ENCODE measurements at regions of chr11 and their contacts with region 1.

Region 1: DNA sequence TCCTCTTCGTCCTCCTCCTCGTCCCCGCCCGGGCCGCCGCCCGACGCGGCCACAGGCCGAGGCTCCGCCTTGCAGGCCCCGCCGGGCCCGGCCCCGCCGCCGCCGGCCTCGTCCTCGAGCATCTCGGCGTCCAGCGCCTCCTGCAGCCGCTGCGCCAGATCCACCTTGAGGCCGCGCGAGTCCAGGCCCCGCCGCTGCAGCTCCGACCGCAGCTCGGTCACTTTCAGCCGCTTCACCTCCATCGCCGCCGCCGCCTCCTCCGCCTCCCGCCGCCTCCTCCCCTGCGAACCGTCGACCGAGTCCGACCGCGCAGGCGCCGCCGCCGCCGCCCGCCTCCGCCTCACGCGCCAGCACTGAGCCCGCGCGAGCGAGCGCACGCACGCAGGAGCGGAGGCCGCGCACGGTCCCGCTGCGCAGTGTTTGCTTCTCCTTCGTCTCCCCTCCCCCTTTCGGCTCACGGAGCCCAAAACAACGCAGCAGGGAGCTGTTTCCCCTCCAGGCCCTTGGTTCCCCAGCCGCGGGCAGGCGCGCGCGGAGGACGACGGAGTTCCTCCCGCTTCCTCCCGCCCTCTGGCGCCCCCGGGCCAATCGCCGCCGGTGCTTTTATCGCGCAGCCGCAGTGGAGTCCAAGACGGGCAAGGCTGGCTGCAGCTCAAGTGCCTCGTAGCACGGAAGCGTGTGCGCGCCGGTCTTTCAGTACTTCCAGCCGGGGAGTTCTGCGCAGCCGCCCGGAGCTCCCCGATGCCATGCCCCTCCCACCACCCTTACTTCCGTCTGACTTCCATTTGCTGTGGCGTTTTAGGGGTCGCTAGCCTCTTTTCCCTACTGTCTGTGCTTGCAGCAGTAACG is at the start of gene HNRNPUL2:
- DNase-seq: peak; percentile 99
- ATAC-seq: peak; percentile 85
- H3K4me3 ChIP-seq: peak within 1 kb of the TSS; percentile 85
- H3K27ac ChIP-seq: peak within 1 kb of the TSS; percentile 96
- H3K4me1 ChIP-seq: peaks cover 4% of the 10 kb centered on the region
- H3K27me3 ChIP-seq: no peaks in the 10 kb centered on the region
- CTCF ChIP-seq: 0 out of 2 replicates have a peak, but pooled peaks have one; percentile 5
- POLR2A ChIP-seq: peak; percentile 87
- RAD21 ChIP-seq: no peak
- total RNA-seq, gene HNRNPUL2: 3.9 and 5.0 TPM in 2 replicates

Region 2: GRCh38 chr11:62573592-62574362 is 153.4 kb before region 1 on chr11 and contains the start of gene EEF1G:
- CTCF ChIA-PET with region 1: no interaction called
- POLR2A ChIA-PET with region 1: no interaction called
- dilution Hi-C with region 1: no loop called
- in situ Hi-C with region 1: no loop called
- intact Hi-C with region 1: no loop called
- DNase-seq: peak; percentile 100
- ATAC-seq: peak; percentile 95
- H3K4me3 ChIP-seq: peak within 1 kb of the TSS; percentile 74
- H3K27ac ChIP-seq: peak within 1 kb of the TSS; percentile 91
- H3K4me1 ChIP-seq: peaks cover 12% of the 10 kb centered on the region
- H3K27me3 ChIP-seq: no peaks in the 10 kb centered on the region
- CTCF ChIP-seq: no peak
- POLR2A ChIP-seq: peak; percentile 94
- RAD21 ChIP-seq: no peak
- total RNA-seq, gene EEF1G: 1,598 and 1,857 TPM in 2 replicates

Region 3: GRCh38 chr11:62705880-62706849 is 21.0 kb before region 1 on chr11:
- CTCF ChIA-PET with region 1: interaction called, 3 read pairs
- POLR2A ChIA-PET with region 1: interaction called, 11 read pairs
- dilution Hi-C with region 1: no loop called
- in situ Hi-C with region 1: no loop called
- intact Hi-C with region 1: no loop called
- DNase-seq: peak; percentile 91
- ATAC-seq: peak; percentile 90
- H3K4me3 ChIP-seq: peak overlapping the region; percentile 55
- H3K27ac ChIP-seq: peak overlapping the region; percentile 33
- H3K4me1 ChIP-seq: peaks cover 16% of the 10 kb centered on the region
- H3K27me3 ChIP-seq: no peaks in the 10 kb centered on the region
- CTCF ChIP-seq: no peak
- POLR2A ChIP-seq: 0 out of 2 replicates have a peak, but pooled peaks have one; percentile 31
- RAD21 ChIP-seq: no peak

Region 4: DNA sequence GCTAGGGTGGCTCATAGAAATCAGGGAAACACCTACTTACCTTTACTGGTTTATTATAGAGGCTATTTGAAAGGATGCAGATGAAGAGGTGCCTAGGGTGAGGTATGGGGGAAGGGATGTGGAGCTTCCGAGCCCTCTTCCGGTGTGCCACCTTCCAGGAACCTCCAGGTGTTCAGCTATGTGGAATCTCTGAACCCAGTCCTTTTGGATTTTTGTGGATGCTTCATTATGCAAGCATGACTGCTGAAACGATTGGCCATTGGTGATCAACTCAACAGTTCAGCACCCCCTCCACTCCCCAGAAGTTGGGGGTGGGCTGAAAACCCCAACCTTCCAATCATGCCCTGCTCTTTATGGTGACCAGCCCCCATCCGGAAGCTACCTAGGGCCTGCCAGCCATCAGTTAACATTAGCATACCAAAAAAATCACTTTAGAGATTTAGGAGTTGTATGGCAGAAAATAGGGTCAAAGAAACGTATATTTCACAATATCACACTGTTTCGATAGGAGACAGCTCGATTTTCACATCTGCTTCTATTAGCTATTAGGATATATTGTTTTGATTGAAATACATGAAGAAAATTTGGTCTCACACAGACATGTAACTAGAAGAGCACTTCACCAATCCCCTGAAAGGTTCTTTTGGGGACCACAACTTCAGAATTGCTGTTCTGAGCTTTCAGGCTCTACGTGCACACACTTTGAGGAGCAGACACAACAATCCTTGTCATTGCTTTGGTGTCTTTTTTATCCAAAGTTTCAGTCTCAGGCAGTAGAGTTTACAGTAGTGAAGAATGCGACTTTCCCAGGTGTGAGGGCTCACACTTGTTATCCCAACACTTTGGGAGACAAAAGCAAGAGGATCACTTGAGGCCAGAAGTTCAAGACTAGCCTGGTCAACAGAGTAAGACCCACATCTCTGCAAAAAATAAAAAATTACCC is 31.0 kb after region 1 on chr11:
- CTCF ChIA-PET with region 1: no interaction called
- POLR2A ChIA-PET with region 1: interaction called, 6 read pairs
- dilution Hi-C with region 1: no loop called
- in situ Hi-C with region 1: no loop called
- intact Hi-C with region 1: loop called (anchors 5 kb)
- DNase-seq: no peak
- ATAC-seq: no peak
- H3K4me3 ChIP-seq: no peak overlapping the region
- H3K27ac ChIP-seq: no peak overlapping the region
- H3K4me1 ChIP-seq: peaks cover 4% of the 10 kb centered on the region
- H3K27me3 ChIP-seq: no peaks in the 10 kb centered on the region
- CTCF ChIP-seq: no peak
- POLR2A ChIP-seq: no peak
- RAD21 ChIP-seq: no peak

Region 5: GRCh38 chr11:62860835-62861563 is 133.9 kb after region 1 on chr11:
- CTCF ChIA-PET with region 1: no interaction called
- POLR2A ChIA-PET with region 1: interaction called, 4 read pairs
- dilution Hi-C with region 1: no loop called
- in situ Hi-C with region 1: no loop called
- intact Hi-C with region 1: loop called (anchors 5 kb)
- DNase-seq: no peak
- ATAC-seq: no peak
- H3K4me3 ChIP-seq: no peak overlapping the region
- H3K27ac ChIP-seq: no peak overlapping the region
- H3K4me1 ChIP-seq: no peaks in the 10 kb centered on the region
- H3K27me3 ChIP-seq: no peaks in the 10 kb centered on the region
- CTCF ChIP-seq: no peak
- POLR2A ChIP-seq: no peak
- RAD21 ChIP-seq: no peak

Region 6: GRCh38 chr11:63080682-63081081 is 353.5 kb after region 1 on chr11:
- CTCF ChIA-PET with region 1: no interaction called
- POLR2A ChIA-PET with region 1: no interaction called
- dilution Hi-C with region 1: no loop called
- in situ Hi-C with region 1: no loop called
- intact Hi-C with region 1: no loop called
- DNase-seq: no peak
- ATAC-seq: no peak
- H3K4me3 ChIP-seq: no peak overlapping the region
- H3K27ac ChIP-seq: no peak overlapping the region
- H3K4me1 ChIP-seq: no peaks in the 10 kb centered on the region
- H3K27me3 ChIP-seq: no peaks in the 10 kb centered on the region
- CTCF ChIP-seq: no peak
- POLR2A ChIP-seq: no peak
- RAD21 ChIP-seq: no peak